CD4-positive, alpha-beta T cell (primary cell): ENCODE measurements at regions of chr12 and their contacts with region 1.

Region 1: DNA sequence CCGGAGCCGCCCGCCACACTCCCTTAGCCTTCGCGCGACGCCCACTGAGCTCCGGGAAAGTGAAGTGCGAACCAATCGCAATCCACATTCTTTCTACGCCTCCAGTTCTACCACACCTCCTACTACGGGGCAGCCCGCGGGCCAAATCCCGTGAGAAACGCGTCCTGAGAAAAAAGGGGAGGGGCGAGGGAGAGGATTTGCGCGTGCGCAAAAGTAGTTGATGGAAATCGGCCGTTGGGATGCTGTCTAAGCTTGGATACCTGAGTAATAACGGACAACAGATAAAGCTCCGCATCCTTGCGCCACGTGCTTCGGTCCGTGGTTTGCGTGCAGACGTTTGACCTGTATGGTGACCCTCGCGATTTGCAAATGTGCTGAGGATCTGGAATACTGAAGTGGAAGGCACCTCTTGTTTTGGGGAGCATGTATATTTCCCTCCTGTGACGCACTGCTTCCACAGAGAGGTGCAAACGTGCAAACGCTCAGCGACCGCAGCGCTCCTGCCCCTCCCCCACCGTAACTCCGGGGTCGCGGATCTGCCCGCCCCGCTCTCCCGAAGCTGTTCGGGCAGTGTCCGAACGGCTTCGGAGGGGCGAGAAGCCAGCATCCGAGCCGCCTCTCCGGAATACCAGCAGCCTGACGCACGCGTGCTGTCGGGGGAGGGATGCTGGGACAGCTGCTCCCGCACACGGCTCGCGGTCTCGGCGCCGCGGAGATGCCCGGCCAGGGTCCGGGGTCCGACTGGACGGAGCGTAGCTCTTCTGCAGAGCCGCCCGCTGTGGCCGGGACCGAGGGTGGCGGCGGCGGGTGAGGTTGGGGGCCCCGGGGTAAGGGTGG is at the starts of genes FAM216A and GPN3:
- DNase-seq: peak; percentile 88 to 97 (median 92)
- ATAC-seq: peak; percentile 89
- H3K4me3 ChIP-seq: peak within 1 kb of the TSS; percentile 72
- H3K4me3 Mint-ChIP-seq: peak within 1 kb of the TSS; percentile 97
- H3K27ac ChIP-seq: peak within 1 kb of the TSS; percentile 66 to 92
- H3K27ac Mint-ChIP-seq: peak within 1 kb of the TSS; percentile 88
- H3K4me1 ChIP-seq: peaks cover 29% of the 10 kb centered on the region
- H3K4me1 Mint-ChIP-seq: peaks cover 33% of the 10 kb centered on the region
- H3K27me3 ChIP-seq: no peaks in the 10 kb centered on the region
- H3K27me3 Mint-ChIP-seq: no peaks in the 10 kb centered on the region
- CTCF ChIP-seq: no peak
- total RNA-seq, gene FAM216A: 5.5 to 7.4 TPM
- total RNA-seq, gene GPN3: 2.7 to 2.8 TPM

Region 2: DNA sequence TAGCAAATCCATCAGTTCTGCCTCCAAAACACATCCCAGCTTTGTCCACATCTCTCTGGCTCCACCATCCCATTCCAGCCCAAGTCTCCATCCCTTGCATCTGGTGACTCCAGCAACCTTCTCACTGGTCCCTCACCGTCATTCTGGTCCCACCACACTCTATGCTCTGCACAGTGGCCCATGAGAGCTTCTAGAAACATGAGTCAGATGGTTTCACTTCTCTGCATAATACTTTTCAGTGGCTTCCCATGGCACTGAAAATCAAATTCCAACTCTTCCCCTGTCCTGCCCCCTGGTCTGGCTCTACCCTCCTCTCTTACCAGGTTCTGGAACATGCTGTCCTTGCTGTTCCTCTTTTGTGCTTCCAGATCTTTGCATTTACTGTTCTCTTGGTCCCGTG is 402.9 kb before region 1 on chr12:
- CTCF ChIA-PET with region 1: no interaction called
- POLR2A ChIA-PET with region 1: no interaction called
- intact Hi-C with region 1: no loop called
- DNase-seq: no peak
- ATAC-seq: no peak
- H3K4me3 ChIP-seq: no peak overlapping the region
- H3K4me3 Mint-ChIP-seq: no peak overlapping the region
- H3K27ac ChIP-seq: no peak overlapping the region
- H3K27ac Mint-ChIP-seq: no peak overlapping the region
- H3K4me1 ChIP-seq: no peaks in the 10 kb centered on the region
- H3K4me1 Mint-ChIP-seq: no peaks in the 10 kb centered on the region
- H3K27me3 ChIP-seq: no peaks in the 10 kb centered on the region
- H3K27me3 Mint-ChIP-seq: no peaks in the 10 kb centered on the region
- CTCF ChIP-seq: no peak

Region 3: DNA sequence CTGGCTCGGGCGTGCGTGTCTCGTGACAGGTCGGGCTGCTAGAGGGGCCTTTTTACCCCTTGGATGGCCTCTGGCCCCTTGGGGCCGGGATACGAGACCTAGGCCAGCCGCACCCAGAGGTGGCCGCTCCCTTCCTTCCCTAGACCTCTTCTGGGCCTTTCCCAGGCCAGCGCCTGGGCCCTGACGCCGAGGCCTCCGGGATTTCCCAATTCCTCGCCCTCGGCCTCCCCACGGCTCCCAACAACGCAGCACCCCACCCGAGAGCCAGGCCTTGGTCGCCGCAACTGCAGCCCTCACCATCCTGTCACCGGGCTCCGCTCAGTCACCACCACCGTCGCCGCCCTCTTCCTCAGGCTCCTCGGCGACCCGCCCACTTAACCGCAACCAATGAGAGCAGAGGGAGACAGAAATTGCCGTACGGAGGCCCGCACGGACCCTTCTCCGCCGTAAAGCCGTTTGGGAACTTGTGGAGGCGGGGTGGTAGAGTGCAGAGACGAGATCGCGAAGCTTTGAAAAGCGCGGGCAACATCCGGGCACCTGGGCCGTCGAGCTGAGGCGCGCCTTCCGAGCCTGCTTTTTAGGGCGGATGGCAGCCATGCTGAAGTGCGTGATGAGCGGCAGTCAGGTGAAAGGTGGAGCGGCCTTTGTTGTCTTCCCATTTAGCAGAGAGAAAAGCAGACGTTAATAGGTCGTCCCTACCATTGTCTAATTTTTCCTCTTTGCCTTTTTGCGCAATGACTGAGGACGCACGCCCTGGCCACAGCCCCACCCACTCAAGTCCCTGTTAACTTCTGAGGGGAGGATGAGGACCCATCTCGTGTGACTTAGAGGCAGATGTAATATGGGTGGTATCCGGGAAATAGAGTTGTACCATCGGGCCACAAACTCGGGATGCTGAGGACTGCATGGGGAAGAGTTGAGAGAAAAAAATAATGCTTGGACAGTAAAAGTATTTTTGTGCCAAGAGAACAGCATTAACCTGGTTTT is 33.6 kb after region 1 on chr12 and contains the starts of genes RAD9B and VPS29:
- CTCF ChIA-PET with region 1: interaction called, 24 read pairs
- POLR2A ChIA-PET with region 1: interaction called, 115 read pairs
- intact Hi-C with region 1: loop called (anchors 1 to 2 kb)
- DNase-seq: peak; percentile 97 to 100 (median 98)
- ATAC-seq: peak; percentile 92
- H3K4me3 ChIP-seq: peak within 1 kb of the TSS; percentile 96
- H3K4me3 Mint-ChIP-seq: peak within 1 kb of the TSS; percentile 98
- H3K27ac ChIP-seq: peak within 1 kb of the TSS; percentile 90 to 93
- H3K27ac Mint-ChIP-seq: peak within 1 kb of the TSS; percentile 90
- H3K4me1 ChIP-seq: peaks cover 24% of the 10 kb centered on the region
- H3K4me1 Mint-ChIP-seq: peaks cover 39% of the 10 kb centered on the region
- H3K27me3 ChIP-seq: no peaks in the 10 kb centered on the region
- H3K27me3 Mint-ChIP-seq: no peaks in the 10 kb centered on the region
- CTCF ChIP-seq: no peak
- total RNA-seq, gene RAD9B: 0.31 to 0.63 TPM
- total RNA-seq, gene VPS29: 62.5 to 64.9 TPM

Region 4: GRCh38 chr12:110577717-110578521 is 109.5 kb after region 1 on chr12:
- CTCF ChIA-PET with region 1: interaction called, 6 read pairs
- POLR2A ChIA-PET with region 1: interaction called, 10 read pairs
- intact Hi-C with region 1: no loop called
- DNase-seq: peak in 6 of 14 experiments; percentile 19 to 83 (median 52)
- ATAC-seq: peak; percentile 27
- H3K4me3 ChIP-seq: peak overlapping the region; percentile 13
- H3K4me3 Mint-ChIP-seq: peak overlapping the region; percentile 96
- H3K27ac ChIP-seq: peak overlapping the region; percentile 67 to 79
- H3K27ac Mint-ChIP-seq: peak overlapping the region; percentile 92
- H3K4me1 ChIP-seq: peaks cover 51% of the 10 kb centered on the region
- H3K4me1 Mint-ChIP-seq: peaks cover 80% of the 10 kb centered on the region
- H3K27me3 ChIP-seq: no peaks in the 10 kb centered on the region
- H3K27me3 Mint-ChIP-seq: no peaks in the 10 kb centered on the region
- CTCF ChIP-seq: no peak

Region 5: GRCh38 chr12:110606253-110606611 is 137.8 kb after region 1 on chr12:
- CTCF ChIA-PET with region 1: interaction called, 49 read pairs
- POLR2A ChIA-PET with region 1: interaction called, 44 read pairs
- intact Hi-C with region 1: loop called in 1 of 2 experiments (anchors 2 kb)
- DNase-seq: no peak
- ATAC-seq: no peak
- H3K4me3 ChIP-seq: peak overlapping the region; percentile 54
- H3K4me3 Mint-ChIP-seq: peak overlapping the region; percentile 91
- H3K27ac ChIP-seq: no peak overlapping the region
- H3K27ac Mint-ChIP-seq: peak overlapping the region; percentile 92
- H3K4me1 ChIP-seq: peaks cover 12% of the 10 kb centered on the region
- H3K4me1 Mint-ChIP-seq: peaks cover 9% of the 10 kb centered on the region
- H3K27me3 ChIP-seq: no peaks in the 10 kb centered on the region
- H3K27me3 Mint-ChIP-seq: no peaks in the 10 kb centered on the region
- CTCF ChIP-seq: no peak

Region 6: GRCh38 chr12:110698171-110698902 is 229.9 kb after region 1 on chr12:
- CTCF ChIA-PET with region 1: interaction called, 4 read pairs
- POLR2A ChIA-PET with region 1: interaction called, 4 read pairs
- intact Hi-C with region 1: loop called in 1 of 2 experiments (anchors 2 kb)
- DNase-seq: peak; percentile 66 to 90 (median 73)
- ATAC-seq: peak; percentile 100
- H3K4me3 ChIP-seq: no peak overlapping the region
- H3K4me3 Mint-ChIP-seq: no peak overlapping the region
- H3K27ac ChIP-seq: no peak overlapping the region
- H3K27ac Mint-ChIP-seq: peak overlapping the region; percentile 21
- H3K4me1 ChIP-seq: peaks cover 10% of the 10 kb centered on the region
- H3K4me1 Mint-ChIP-seq: peaks cover 17% of the 10 kb centered on the region
- H3K27me3 ChIP-seq: no peaks in the 10 kb centered on the region
- H3K27me3 Mint-ChIP-seq: no peaks in the 10 kb centered on the region
- CTCF ChIP-seq: peak; percentile 86

Region 7: GRCh38 chr12:110993472-110993833 is 525.0 kb after region 1 on chr12:
- CTCF ChIA-PET with region 1: no interaction called
- POLR2A ChIA-PET with region 1: no interaction called
- intact Hi-C with region 1: no loop called
- DNase-seq: no peak
- ATAC-seq: no peak
- H3K4me3 ChIP-seq: no peak overlapping the region
- H3K4me3 Mint-ChIP-seq: no peak overlapping the region
- H3K27ac ChIP-seq: no peak overlapping the region
- H3K27ac Mint-ChIP-seq: no peak overlapping the region
- H3K4me1 ChIP-seq: no peaks in the 10 kb centered on the region
- H3K4me1 Mint-ChIP-seq: no peaks in the 10 kb centered on the region
- H3K27me3 ChIP-seq: peaks cover 0 to 4% of the 10 kb centered on the region in 2 experiments
- H3K27me3 Mint-ChIP-seq: peaks cover 23% of the 10 kb centered on the region
- CTCF ChIP-seq: no peak